ENCODE measurements at regions of chr22 and their contacts with region 1.

Region 1: DNA sequence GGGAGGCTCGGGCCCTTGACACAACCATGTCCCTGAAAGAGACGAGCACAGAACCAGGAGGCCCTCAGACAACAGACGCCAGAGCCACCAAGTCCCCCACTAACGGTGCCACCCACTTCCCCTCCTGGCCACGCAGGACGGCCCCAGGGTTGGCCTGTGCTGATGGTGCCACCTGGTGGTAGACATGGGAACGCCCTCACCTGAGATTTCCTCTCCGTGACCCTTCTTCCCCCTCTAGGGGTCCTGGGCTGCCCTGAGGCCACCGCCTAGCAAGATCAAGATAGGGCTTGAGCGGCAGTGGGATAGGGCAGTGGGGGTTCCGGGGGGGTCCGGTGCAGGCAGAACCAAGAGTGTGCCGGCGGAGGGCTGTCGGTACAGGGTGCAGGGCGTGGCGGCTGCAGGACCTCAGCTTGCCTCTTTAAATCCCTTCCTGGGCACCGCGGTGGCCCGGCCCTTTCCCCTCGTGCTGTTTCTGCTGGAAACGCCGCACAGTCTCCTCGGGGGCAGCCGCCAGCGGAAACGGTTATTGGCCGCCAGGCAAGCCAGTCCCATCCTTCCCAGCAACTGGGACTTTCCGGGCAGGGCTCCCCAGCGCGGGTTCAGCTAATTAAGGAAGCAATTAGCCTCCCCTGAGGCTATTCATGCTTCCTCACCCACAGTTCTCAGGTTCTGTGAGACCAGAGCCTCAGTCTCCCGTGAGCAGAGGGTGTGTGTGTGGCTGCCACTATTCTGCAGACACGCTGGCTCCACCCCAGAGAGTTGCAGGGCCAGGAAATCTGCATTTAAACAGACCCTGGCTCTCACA is 5.5 kb upstream of the NFAM1 start:
- DNase-seq: peak; percentile 86
- H3K4me3 ChIP-seq: peak overlapping the region; percentile 61
- H3K27ac ChIP-seq: peak overlapping the region; percentile 57
- H3K4me1 ChIP-seq: peaks cover 77% of the 10 kb centered on the region
- CTCF ChIP-seq: peak; percentile 97

Region 2: GRCh38 chr22:42090596-42091454 is 346.9 kb before region 1 on chr22 and contains the start of gene NDUFA6:
- CTCF ChIA-PET with region 1: interaction called, 3 read pairs
- POLR2A ChIA-PET with region 1: no interaction called
- intact Hi-C with region 1: loop called (anchors 1 kb)
- DNase-seq: peak; percentile 99
- H3K4me3 ChIP-seq: peak within 1 kb of the TSS; percentile 84
- H3K27ac ChIP-seq: peak within 1 kb of the TSS; percentile 71
- H3K4me1 ChIP-seq: peaks cover 23% of the 10 kb centered on the region
- CTCF ChIP-seq: peak; percentile 93
- total RNA-seq, gene NDUFA6: 49.8 and 62.4 TPM in 2 replicates

Region 3: DNA sequence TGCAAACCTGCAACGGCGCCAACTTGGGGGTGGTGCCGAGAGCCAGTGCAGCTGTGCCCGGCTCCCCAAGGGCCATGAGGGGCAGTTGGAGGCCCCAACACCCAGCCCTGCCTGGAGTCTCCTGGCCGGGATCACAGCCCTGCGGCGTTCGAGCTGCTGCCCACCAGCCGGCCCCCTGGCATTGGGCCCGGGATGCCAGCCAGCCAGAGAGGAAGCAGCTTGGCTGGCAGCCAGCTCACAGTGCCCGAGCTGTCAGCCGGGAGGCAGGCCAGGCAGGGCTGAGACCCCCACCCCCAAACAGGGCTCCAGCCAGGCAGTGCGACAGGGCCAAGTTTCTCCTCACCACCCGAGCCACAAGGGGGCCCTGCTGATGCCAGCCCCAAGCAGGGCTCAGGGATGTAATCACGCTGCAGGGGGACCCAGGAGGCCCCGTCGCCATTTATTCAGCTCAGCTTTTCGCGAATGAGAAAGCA is 141.3 kb before region 1 on chr22:
- CTCF ChIA-PET with region 1: no interaction called
- POLR2A ChIA-PET with region 1: no interaction called
- intact Hi-C with region 1: loop called (anchors 5 kb)
- DNase-seq: peak; percentile 77
- H3K4me3 ChIP-seq: no peak overlapping the region
- H3K27ac ChIP-seq: peak overlapping the region; percentile 83
- H3K4me1 ChIP-seq: peaks cover 86% of the 10 kb centered on the region
- CTCF ChIP-seq: peak; percentile 83

Region 4: GRCh38 chr22:42317008-42317407 is 120.7 kb before region 1 on chr22:
- CTCF ChIA-PET with region 1: no interaction called
- POLR2A ChIA-PET with region 1: no interaction called
- intact Hi-C with region 1: no loop called
- DNase-seq: no peak
- H3K4me3 ChIP-seq: no peak overlapping the region
- H3K27ac ChIP-seq: no peak overlapping the region
- H3K4me1 ChIP-seq: peaks cover 9% of the 10 kb centered on the region
- CTCF ChIP-seq: no peak

Region 5: GRCh38 chr22:42635531-42635930 is 197.8 kb after region 1 on chr22:
- CTCF ChIA-PET with region 1: no interaction called
- POLR2A ChIA-PET with region 1: no interaction called
- intact Hi-C with region 1: no loop called
- DNase-seq: no peak
- H3K4me3 ChIP-seq: no peak overlapping the region
- H3K27ac ChIP-seq: no peak overlapping the region
- H3K4me1 ChIP-seq: no peaks in the 10 kb centered on the region
- CTCF ChIP-seq: no peak